Activated CD8-positive, alpha-beta T cell treated with anti-CD3 and anti-CD28 coated beads for 36 hours (primary cell): ENCODE measurements at regions of chr14 and their contacts with region 1.

Region 1: GRCh38 chr14:22986508-22987054 is 4.2 kb upstream of the AJUBA start:
- DNase-seq: peak; percentile 95
- ATAC-seq: peak; percentile 61
- H3K4me3 Mint-ChIP-seq: no peak overlapping the region
- H3K27ac Mint-ChIP-seq: no peak overlapping the region
- H3K4me1 Mint-ChIP-seq: no peaks in the 10 kb centered on the region
- H3K27me3 Mint-ChIP-seq: no peaks in the 10 kb centered on the region
- CTCF ChIP-seq: peak; percentile 94

Region 2: GRCh38 chr14:22836301-22837113 is 150.1 kb before region 1 on chr14 and contains the start of gene MMP14:
- CTCF ChIA-PET with region 1: no interaction called
- POLR2A ChIA-PET with region 1: no interaction called
- intact Hi-C with region 1: no loop called
- DNase-seq: no peak
- ATAC-seq: no peak
- H3K4me3 Mint-ChIP-seq: peak within 1 kb of the TSS; percentile 42
- H3K27ac Mint-ChIP-seq: no peak within 1 kb of the TSS
- H3K4me1 Mint-ChIP-seq: peaks cover 10% of the 10 kb centered on the region
- H3K27me3 Mint-ChIP-seq: peaks cover 13% of the 10 kb centered on the region
- CTCF ChIP-seq: no peak
- total RNA-seq, gene MMP14: 1.9 to 3.1 TPM

Region 3: GRCh38 chr14:22878271-22879246 is 108.0 kb before region 1 on chr14:
- CTCF ChIA-PET with region 1: no interaction called
- POLR2A ChIA-PET with region 1: no interaction called
- intact Hi-C with region 1: no loop called
- DNase-seq: no peak
- ATAC-seq: no peak
- H3K4me3 Mint-ChIP-seq: no peak overlapping the region
- H3K27ac Mint-ChIP-seq: no peak overlapping the region
- H3K4me1 Mint-ChIP-seq: peaks cover 14% of the 10 kb centered on the region
- H3K27me3 Mint-ChIP-seq: peaks cover 1% of the 10 kb centered on the region
- CTCF ChIP-seq: no peak

Region 4: GRCh38 chr14:22901799-22902198 is 84.8 kb before region 1 on chr14:
- CTCF ChIA-PET with region 1: no interaction called
- POLR2A ChIA-PET with region 1: no interaction called
- intact Hi-C with region 1: no loop called
- DNase-seq: no peak
- ATAC-seq: no peak
- H3K4me3 Mint-ChIP-seq: no peak overlapping the region
- H3K27ac Mint-ChIP-seq: no peak overlapping the region
- H3K4me1 Mint-ChIP-seq: peaks cover 13% of the 10 kb centered on the region
- H3K27me3 Mint-ChIP-seq: no peaks in the 10 kb centered on the region
- CTCF ChIP-seq: no peak

Region 5: DNA sequence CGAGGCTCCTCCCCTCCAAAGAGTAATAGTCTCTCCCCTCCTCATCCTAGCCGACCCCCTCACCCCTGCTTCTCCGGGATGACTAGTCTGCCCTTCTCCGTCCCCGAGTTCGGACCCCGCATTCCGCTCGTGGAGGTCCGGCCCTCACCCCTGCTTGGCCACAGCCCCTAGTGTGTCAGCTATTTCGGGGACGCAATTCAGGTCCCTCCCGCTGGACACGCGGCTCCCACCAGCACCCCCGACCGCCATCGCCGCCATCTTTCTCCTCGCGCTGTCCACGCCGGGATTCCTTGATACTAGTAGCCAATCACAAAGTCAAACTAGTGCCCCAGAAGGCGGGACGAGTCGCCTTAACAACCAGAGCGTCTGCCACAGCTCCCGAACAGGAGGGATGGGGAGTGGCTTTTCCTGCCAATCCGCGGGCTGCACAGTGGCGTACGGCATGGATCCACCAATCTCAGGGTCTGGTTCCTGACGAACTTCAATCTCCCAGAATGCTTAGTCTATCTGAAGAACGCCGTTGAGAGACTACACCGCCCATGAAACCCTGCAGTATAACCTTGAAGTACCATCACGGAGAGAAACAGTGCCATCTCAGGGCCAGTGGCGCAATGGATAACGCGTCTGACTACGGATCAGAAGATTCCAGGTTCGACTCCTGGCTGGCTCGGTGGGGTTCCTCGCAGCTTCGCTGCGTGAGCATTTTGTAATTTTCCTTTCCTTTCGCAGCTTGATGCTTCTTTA is 57.3 kb before region 1 on chr14 and contains the start of gene PRMT5:
- CTCF ChIA-PET with region 1: interaction called, 67 read pairs
- POLR2A ChIA-PET with region 1: interaction called, 6 read pairs
- intact Hi-C with region 1: loop called (anchors 2 kb)
- DNase-seq: peak; percentile 99
- ATAC-seq: peak; percentile 96
- H3K4me3 Mint-ChIP-seq: no peak within 1 kb of the TSS
- H3K27ac Mint-ChIP-seq: no peak within 1 kb of the TSS
- H3K4me1 Mint-ChIP-seq: peaks cover 31% of the 10 kb centered on the region
- H3K27me3 Mint-ChIP-seq: no peaks in the 10 kb centered on the region
- CTCF ChIP-seq: no peak
- total RNA-seq, gene PRMT5: 107 to 116 TPM

Region 6: GRCh38 chr14:22945642-22946041 is 40.9 kb before region 1 on chr14:
- CTCF ChIA-PET with region 1: interaction called, 12 read pairs
- POLR2A ChIA-PET with region 1: no interaction called
- intact Hi-C with region 1: no loop called
- DNase-seq: no peak
- ATAC-seq: no peak
- H3K4me3 Mint-ChIP-seq: no peak overlapping the region
- H3K27ac Mint-ChIP-seq: no peak overlapping the region
- H3K4me1 Mint-ChIP-seq: no peaks in the 10 kb centered on the region
- H3K27me3 Mint-ChIP-seq: no peaks in the 10 kb centered on the region
- CTCF ChIP-seq: no peak

Region 7: DNA sequence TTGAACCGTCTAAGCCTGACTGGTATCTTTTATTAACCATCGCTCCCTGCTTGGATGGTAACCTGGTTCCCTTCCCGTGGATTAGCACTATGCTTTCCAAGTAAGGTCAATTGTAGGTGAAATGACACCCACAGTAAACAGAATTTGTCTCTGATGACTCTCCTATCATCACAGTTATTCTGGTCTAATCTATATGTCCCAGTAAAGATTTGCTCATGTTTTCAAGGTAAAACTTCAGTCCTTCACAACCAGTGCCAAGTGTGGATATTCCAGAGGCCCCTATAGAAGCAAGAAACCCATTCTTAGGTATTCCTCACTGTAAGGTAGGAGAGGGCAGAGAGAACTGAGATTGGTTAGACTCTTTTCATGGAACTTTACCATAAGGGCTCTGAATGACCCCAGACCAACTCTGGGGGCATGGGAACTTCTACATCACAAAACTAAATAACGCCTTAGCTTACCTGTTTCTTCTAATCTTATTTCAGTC is 19.8 kb before region 1 on chr14:
- CTCF ChIA-PET with region 1: interaction called, 209 read pairs
- POLR2A ChIA-PET with region 1: interaction called, 3 read pairs
- intact Hi-C with region 1: no loop called
- DNase-seq: no peak
- ATAC-seq: no peak
- H3K4me3 Mint-ChIP-seq: no peak overlapping the region
- H3K27ac Mint-ChIP-seq: no peak overlapping the region
- H3K4me1 Mint-ChIP-seq: no peaks in the 10 kb centered on the region
- H3K27me3 Mint-ChIP-seq: no peaks in the 10 kb centered on the region
- CTCF ChIP-seq: no peak

Region 8: GRCh38 chr14:23000860-23001259 is 14.3 kb after region 1 on chr14:
- CTCF ChIA-PET with region 1: interaction called, 150 read pairs
- POLR2A ChIA-PET with region 1: no interaction called
- intact Hi-C with region 1: no loop called
- DNase-seq: no peak
- ATAC-seq: peak; percentile 47
- H3K4me3 Mint-ChIP-seq: no peak overlapping the region
- H3K27ac Mint-ChIP-seq: no peak overlapping the region
- H3K4me1 Mint-ChIP-seq: peaks cover 10% of the 10 kb centered on the region
- H3K27me3 Mint-ChIP-seq: no peaks in the 10 kb centered on the region
- CTCF ChIP-seq: no peak

Region 9: GRCh38 chr14:23025151-23025814 is 38.7 kb after region 1 on chr14:
- CTCF ChIA-PET with region 1: interaction called, 18 read pairs
- POLR2A ChIA-PET with region 1: interaction called, 3 read pairs
- intact Hi-C with region 1: no loop called
- DNase-seq: peak; percentile 61
- ATAC-seq: peak; percentile 74
- H3K4me3 Mint-ChIP-seq: peak overlapping the region; percentile 3
- H3K27ac Mint-ChIP-seq: peak overlapping the region; percentile 84
- H3K4me1 Mint-ChIP-seq: peaks cover 65% of the 10 kb centered on the region
- H3K27me3 Mint-ChIP-seq: no peaks in the 10 kb centered on the region
- CTCF ChIP-seq: no peak

Region 10: GRCh38 chr14:23057757-23058653 is 71.4 kb after region 1 on chr14:
- CTCF ChIA-PET with region 1: interaction called, 518 read pairs
- POLR2A ChIA-PET with region 1: interaction called, 10 read pairs
- intact Hi-C with region 1: loop called (anchors 2 kb)
- DNase-seq: peak; percentile 91
- ATAC-seq: peak; percentile 73
- H3K4me3 Mint-ChIP-seq: peak overlapping the region; percentile 76
- H3K27ac Mint-ChIP-seq: no peak overlapping the region
- H3K4me1 Mint-ChIP-seq: peaks cover 19% of the 10 kb centered on the region
- H3K27me3 Mint-ChIP-seq: peaks cover 7% of the 10 kb centered on the region
- CTCF ChIP-seq: peak; percentile 94

Region 11: DNA sequence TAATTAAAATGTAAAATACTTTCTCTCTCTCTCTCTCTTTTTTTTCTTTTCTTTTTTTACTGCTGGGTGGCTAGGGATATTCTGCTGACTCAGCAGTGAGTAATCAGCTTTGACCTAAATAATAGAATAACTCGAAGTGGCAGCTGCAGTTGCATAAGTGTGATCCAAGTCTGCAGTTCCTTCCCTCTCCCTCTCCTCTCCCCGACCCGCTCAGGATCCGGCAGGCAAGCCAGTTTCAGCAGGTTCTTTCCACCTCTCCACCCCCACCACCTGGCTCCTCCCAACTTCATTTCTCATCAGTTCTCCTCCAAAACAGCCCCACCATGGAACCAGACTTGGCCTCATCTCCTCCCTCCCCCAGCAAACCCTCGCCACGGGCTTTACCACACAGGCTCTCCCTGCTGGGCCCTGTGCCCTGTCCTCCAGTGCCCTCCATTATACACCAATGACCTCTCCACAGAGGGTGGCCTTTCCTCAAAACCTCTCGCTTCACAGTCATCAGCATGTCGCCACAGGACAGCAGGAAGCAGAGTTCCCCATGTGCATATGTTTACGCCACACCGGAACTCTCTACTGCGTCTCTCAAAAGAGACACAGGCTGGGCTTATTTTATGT is 174.4 kb after region 1 on chr14:
- CTCF ChIA-PET with region 1: no interaction called
- POLR2A ChIA-PET with region 1: no interaction called
- intact Hi-C with region 1: no loop called
- DNase-seq: no peak
- ATAC-seq: no peak
- H3K4me3 Mint-ChIP-seq: no peak overlapping the region
- H3K27ac Mint-ChIP-seq: no peak overlapping the region
- H3K4me1 Mint-ChIP-seq: peaks cover 14% of the 10 kb centered on the region
- H3K27me3 Mint-ChIP-seq: no peaks in the 10 kb centered on the region
- CTCF ChIP-seq: no peak